WTC11 (cell line): ENCODE measurements at regions of chr5 and their contacts with region 1.

Region 1: GRCh38 chr5:179668391-179668790 is 12.4 kb downstream of the CBY3 start:
- DNase-seq: peak; percentile 82
- ATAC-seq: peak; percentile 97
- H3K4me3 Mint-ChIP-seq: no peak overlapping the region
- H3K27ac Mint-ChIP-seq: no peak overlapping the region
- H3K4me1 Mint-ChIP-seq: no peaks in the 10 kb centered on the region; the same call in 1 of the 2 replicates
- H3K27me3 Mint-ChIP-seq: no peaks in the 10 kb centered on the region
- CTCF ChIP-seq: peak; percentile 88

Region 2: DNA sequence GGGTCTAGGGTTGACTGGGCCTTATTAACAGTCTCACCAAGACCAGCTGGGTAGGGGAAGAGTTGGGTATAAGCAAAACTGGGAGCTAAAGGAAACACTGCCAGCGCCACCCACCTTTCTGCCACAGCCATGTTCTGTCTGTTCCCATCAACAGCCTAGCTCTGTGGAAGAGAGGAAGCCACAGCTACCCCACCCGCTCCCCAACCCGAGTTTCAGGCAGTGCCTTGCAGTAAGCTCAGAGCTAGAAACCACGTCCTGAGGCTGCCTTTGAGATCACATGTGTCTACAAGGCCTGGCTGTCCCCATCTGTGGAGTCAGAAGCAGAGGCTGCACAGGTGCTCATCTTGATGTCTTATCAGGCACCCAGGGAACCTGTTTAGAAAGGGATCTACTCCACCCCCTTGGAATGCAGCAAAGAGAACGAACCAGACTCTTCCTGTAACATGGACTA is 60.2 kb before region 1 on chr5:
- CTCF ChIA-PET with region 1: interaction called, 11 read pairs
- POLR2A ChIA-PET with region 1: no interaction called
- DNase-seq: no peak
- ATAC-seq: no peak
- H3K4me3 Mint-ChIP-seq: no peak overlapping the region
- H3K27ac Mint-ChIP-seq: no peak overlapping the region
- H3K4me1 Mint-ChIP-seq: peaks cover 5% of the 10 kb centered on the region; the same call in 1 of the 2 replicates
- H3K27me3 Mint-ChIP-seq: no peaks in the 10 kb centered on the region
- CTCF ChIP-seq: no peak

Region 3: GRCh38 chr5:179678223-179679013 is 10.0 kb after region 1 on chr5:
- CTCF ChIA-PET with region 1: interaction called, 27 read pairs
- POLR2A ChIA-PET with region 1: interaction called, 5 read pairs
- DNase-seq: peak; percentile 93
- ATAC-seq: peak; percentile 86
- H3K4me3 Mint-ChIP-seq: peak overlapping the region; percentile 92
- H3K27ac Mint-ChIP-seq: peak overlapping the region; percentile 57; the same call in 1 of the 2 replicates
- H3K4me1 Mint-ChIP-seq: peaks cover 13% of the 10 kb centered on the region
- H3K27me3 Mint-ChIP-seq: peaks cover 15% of the 10 kb centered on the region
- CTCF ChIP-seq: no peak; the same call in 1 of the 2 replicates